ENCODE measurements at regions of chr12 and their contacts with region 1.

Region 1: DNA sequence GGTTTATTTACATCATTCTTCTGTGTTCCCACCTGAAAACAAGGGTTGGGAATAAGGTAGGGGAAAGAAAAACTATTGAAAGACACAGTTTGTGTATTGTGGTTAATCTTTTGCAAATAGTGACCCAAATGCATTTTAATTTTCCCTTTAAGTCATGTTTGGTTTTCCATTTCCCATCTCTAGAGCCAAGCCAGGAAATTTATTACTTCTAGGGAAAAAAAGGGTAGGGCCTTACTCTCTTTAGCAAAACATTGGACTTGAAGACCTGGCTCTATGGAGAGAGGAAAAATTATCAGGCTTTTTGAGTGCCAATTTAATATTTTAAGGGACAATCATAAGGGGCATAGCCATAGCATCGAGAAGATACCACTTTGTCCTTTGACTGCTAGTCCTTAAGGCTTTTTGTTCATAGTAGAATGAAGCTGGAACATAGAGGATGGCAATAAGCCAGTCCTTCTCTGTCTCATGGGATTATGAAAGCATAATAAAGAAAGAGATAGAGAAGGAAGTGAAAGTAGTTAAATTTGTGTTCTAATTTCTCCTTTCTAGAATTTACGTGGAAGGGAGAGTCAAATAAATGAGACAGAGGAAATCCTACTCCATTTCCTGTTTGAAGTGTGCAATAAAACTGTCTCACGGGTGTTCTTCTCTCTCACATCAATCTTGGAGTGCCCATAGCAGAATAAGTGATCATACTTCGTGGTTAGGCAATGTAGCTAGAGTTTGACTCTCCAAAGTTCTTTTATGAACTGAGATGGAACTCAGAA is 50.9 kb upstream of the PPFIA2 start:
- DNase-seq: no peak

Region 2: GRCh38 chr12:81835783-81836182 is 25.8 kb after region 1 on chr12:
- intact Hi-C with region 1: loop called in 1 of 2 experiments (anchors 2 kb)
- DNase-seq: no peak

Measured in posterior vena cava (tissue), 2 donors.